ENCODE measurements at regions of chr21 and their contacts with region 1.

Region 1: GRCh38 chr21:21247451-21247850 is 249.2 kb downstream of the NCAM2 start:
- DNase-seq: no peak
- ATAC-seq: no peak

Region 2: DNA sequence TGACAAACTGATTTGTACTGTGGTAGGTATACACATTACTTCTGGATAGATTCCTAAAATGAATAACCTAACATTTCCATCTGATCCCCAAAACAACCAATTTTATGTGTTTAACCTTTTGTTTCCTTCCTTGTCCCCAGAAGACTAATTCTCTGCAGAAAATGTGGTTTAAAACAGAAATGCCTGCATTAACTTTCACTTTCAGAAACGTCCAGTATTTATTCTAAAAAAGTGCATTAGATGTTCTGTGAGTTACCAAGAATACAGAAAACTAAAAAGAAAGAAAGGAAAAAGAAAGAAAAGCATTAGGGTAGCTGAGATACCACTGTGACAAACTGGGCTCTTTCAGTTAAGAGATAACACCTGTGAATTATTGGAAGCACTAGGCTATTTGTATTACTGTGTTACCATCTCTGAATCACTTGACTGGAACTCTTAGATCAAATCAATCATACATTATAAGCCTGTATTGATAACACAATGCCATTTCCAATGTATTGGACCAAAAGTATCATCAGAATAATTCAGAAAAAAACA is 71.6 kb before region 1 on chr21:
- intact Hi-C with region 1: loop called (anchors 2 kb)
- DNase-seq: no peak
- ATAC-seq: no peak

Region 3: GRCh38 chr21:21415741-21416140 is 168.3 kb after region 1 on chr21:
- intact Hi-C with region 1: no loop called
- DNase-seq: no peak
- ATAC-seq: no peak

Measured in sciatic nerve (tissue), 2 donors.